Activated CD8-positive, alpha-beta T cell treated with anti-CD3 and anti-CD28 coated beads, Interleukin-2, amount 10 ng/mL, durations not matched to agents 7 days and 5 days (primary cell): ENCODE measurements at regions of chr1 and their contacts with region 1.

Region 1: DNA sequence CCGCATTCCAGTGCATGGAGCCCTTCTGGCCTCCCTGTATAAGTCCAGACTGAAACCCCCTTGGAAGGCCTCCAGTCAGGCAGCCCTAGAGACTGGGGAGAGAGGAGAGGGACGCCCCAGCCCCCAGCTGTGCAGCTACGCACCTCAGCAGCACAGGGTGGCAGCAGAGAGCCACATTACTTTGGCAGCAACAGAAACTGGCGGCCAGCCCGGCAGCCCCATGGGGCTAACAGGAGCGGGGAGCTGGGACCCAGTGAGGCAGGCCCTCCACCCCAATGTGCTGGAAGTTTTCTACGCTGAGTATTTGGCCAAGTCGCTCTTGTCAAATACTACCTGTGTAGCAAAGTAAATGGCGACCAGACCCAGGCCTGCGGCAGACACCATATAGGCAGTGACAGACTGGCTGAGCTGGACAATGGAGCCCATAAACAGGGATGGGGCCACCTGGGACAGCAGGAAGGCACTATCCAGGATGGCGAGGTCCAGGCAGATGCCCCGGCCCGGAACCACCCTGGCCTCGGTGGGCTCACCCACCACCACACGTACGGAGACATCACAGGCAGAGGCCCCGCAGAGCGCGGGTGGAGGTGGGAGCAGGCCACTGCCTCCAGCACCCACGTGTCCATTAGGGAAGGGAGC is 21.2 kb downstream of the SLC45A3 start:
- DNase-seq: peak; percentile 82
- ATAC-seq: peak; percentile 93
- H3K4me3 Mint-ChIP-seq: no peak overlapping the region
- H3K27ac Mint-ChIP-seq: no peak overlapping the region
- H3K4me1 Mint-ChIP-seq: no peaks in the 10 kb centered on the region
- H3K27me3 Mint-ChIP-seq: peaks cover 5% of the 10 kb centered on the region

Region 2: DNA sequence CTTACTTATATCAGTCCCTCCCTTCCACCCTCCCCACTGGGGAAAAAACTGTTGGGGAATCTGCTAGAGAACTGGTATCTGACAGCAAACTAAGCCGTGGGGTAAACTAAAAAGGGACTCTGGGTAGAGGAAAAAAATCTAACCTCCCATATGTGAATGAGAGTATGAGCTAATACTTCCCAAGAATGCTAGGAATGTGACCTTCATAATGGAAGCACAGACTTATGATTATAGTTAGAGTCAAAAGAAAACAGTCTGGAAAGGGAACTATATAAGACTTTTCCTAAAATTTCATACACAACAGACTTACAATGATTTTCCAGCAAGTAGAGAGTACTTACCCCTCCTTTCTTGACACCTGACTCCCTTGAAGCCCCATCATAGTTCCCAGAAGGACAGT is 514.3 kb before region 1 on chr1:
- CTCF ChIA-PET with region 1: no interaction called
- POLR2A ChIA-PET with region 1: no interaction called
- DNase-seq: no peak
- ATAC-seq: no peak
- H3K4me3 Mint-ChIP-seq: no peak overlapping the region
- H3K27ac Mint-ChIP-seq: no peak overlapping the region
- H3K4me1 Mint-ChIP-seq: peaks cover 7% of the 10 kb centered on the region
- H3K27me3 Mint-ChIP-seq: no peaks in the 10 kb centered on the region

Region 3: DNA sequence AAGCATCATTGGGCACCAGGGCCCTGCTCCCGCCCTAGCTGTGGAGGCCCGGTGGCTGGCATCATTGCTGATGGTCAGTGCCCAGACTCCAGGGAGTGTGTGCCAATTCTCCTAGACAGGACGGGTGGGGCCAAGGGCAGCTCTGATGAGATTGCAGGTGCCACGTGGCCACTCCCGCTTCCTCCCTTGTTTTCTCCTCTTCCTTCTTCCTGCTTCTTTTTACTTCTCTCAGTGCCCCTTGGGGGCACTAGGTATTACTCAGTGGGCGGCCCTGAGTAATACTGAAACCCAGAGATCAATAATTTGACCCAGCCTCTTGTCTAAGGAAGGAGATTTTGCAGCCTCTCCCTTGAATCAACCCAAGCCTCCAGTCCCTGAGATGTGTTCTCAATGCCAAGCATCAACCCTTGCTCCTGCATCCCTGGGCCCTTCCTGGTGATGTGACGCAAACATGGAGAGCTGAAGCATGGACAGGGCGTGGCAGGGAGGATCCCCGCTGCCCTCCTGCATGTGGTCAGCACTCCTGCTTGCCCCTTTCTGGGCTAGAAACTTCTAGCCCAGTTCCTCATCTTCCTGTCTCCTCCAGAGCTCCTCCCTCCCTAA is 122.2 kb before region 1 on chr1:
- CTCF ChIA-PET with region 1: interaction called, 29 read pairs
- POLR2A ChIA-PET with region 1: no interaction called
- DNase-seq: no peak
- ATAC-seq: no peak
- H3K4me3 Mint-ChIP-seq: no peak overlapping the region
- H3K27ac Mint-ChIP-seq: no peak overlapping the region
- H3K4me1 Mint-ChIP-seq: peaks cover 11% of the 10 kb centered on the region
- H3K27me3 Mint-ChIP-seq: peaks cover 13% of the 10 kb centered on the region

Region 4: GRCh38 chr1:205591522-205592351 is 67.3 kb before region 1 on chr1:
- CTCF ChIA-PET with region 1: interaction called, 444 read pairs
- POLR2A ChIA-PET with region 1: interaction called, 33 read pairs
- DNase-seq: peak; percentile 91
- ATAC-seq: peak; percentile 90
- H3K4me3 Mint-ChIP-seq: peak overlapping the region; percentile 81
- H3K27ac Mint-ChIP-seq: peak overlapping the region; percentile 95
- H3K4me1 Mint-ChIP-seq: peaks cover 42% of the 10 kb centered on the region
- H3K27me3 Mint-ChIP-seq: peaks cover 3% of the 10 kb centered on the region

Region 5: GRCh38 chr1:205645519-205645918 is 13.5 kb before region 1 on chr1:
- CTCF ChIA-PET with region 1: interaction called, 34 read pairs
- POLR2A ChIA-PET with region 1: no interaction called
- DNase-seq: no peak
- ATAC-seq: no peak
- H3K4me3 Mint-ChIP-seq: no peak overlapping the region
- H3K27ac Mint-ChIP-seq: no peak overlapping the region
- H3K4me1 Mint-ChIP-seq: no peaks in the 10 kb centered on the region
- H3K27me3 Mint-ChIP-seq: peaks cover 7% of the 10 kb centered on the region

Region 6: DNA sequence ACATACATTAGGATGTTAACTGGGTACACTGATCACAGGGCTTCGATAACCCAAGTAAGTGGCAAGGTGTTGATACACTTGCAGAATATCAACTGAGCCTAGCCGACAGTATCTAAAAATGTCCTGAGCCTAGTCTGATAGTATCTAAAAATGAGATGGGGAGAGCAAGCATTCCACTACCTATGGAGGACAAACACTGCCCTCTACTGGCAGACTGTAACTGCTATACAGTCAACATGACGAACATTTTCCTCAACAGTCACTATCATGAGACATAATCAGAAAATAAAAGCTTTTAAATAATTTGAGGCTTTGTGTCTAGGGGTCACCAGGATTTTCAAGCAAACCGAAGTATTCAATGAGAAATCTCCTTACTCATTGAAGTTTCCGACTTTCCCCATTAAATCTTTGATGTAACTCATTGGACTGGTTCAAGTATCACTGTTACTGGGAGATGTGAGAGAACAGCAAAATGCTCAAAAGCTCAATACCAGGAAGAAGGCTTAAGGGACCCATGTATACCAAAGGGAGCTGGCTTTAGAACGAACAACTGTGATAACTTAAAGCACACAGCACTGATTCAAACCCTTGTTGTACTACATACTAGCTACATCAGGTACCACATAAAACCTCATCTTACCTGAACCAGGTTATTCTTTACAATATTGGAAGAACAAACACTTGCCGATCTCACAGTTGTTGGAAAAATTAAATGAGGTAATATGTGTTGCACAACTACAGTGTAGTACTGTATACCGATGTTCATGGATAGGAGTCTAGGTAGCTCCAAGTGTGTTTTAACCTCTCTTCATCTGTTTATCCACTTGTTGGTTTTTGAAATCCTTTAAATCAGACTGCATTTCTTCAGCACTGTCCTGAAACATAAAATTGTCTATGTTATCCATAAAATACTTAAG is 52.3 kb after region 1 on chr1:
- CTCF ChIA-PET with region 1: interaction called, 231 read pairs
- POLR2A ChIA-PET with region 1: interaction called, 3 read pairs
- DNase-seq: peak; percentile 80
- ATAC-seq: peak; percentile 90
- H3K4me3 Mint-ChIP-seq: no peak overlapping the region
- H3K27ac Mint-ChIP-seq: peak overlapping the region; percentile 31
- H3K4me1 Mint-ChIP-seq: peaks cover 12% of the 10 kb centered on the region
- H3K27me3 Mint-ChIP-seq: no peaks in the 10 kb centered on the region

Region 7: GRCh38 chr1:205791568-205792180 is 132.6 kb after region 1 on chr1:
- CTCF ChIA-PET with region 1: interaction called, 19 read pairs
- POLR2A ChIA-PET with region 1: no interaction called
- DNase-seq: peak; percentile 74
- ATAC-seq: peak; percentile 93
- H3K4me3 Mint-ChIP-seq: no peak overlapping the region
- H3K27ac Mint-ChIP-seq: no peak overlapping the region
- H3K4me1 Mint-ChIP-seq: no peaks in the 10 kb centered on the region
- H3K27me3 Mint-ChIP-seq: no peaks in the 10 kb centered on the region